Gastrocnemius medialis (tissue), 4 donors: ENCODE measurements at regions of chr4 and their contacts with region 1.

Region 1: GRCh38 chr4:40736910-40737309 is 12.8 kb upstream of the NSUN7 start:
- DNase-seq: no peak
- ATAC-seq: no peak
- H3K4me3 ChIP-seq: no peak overlapping the region
- H3K27ac ChIP-seq: no peak overlapping the region
- H3K4me1 ChIP-seq: peaks cover 2% of the 10 kb centered on the region in 2 donors
- H3K27me3 ChIP-seq: no peaks in the 10 kb centered on the region
- CTCF ChIP-seq: peak in 1 of 5 experiments; percentile 26
- POLR2A ChIP-seq: no peak

Region 2: DNA sequence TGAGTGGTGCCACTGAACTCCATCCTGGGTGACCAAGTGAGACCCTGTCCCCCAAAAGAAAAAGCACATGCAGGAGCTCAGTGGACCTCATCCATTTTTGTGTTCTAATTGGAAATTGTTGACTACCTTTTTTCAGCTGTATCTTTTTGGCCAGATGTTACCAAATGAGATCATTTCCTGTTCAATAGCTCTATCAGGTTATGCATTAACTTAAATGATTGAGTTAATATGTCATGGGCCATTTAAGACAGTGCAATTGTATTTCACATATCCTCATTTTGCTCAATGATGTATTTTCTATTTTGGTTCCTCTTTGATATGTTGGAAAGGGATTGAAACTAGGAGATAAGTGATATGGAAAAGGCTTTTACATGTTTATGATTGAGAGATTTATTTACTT is 566.3 kb before region 1 on chr4:
- in situ Hi-C with region 1: no loop called
- intact Hi-C with region 1: no loop called
- DNase-seq: no peak
- ATAC-seq: no peak
- H3K4me3 ChIP-seq: no peak overlapping the region
- H3K27ac ChIP-seq: no peak overlapping the region
- H3K4me1 ChIP-seq: no peaks in the 10 kb centered on the region
- H3K27me3 ChIP-seq: no peaks in the 10 kb centered on the region
- CTCF ChIP-seq: no peak
- POLR2A ChIP-seq: no peak

Region 3: GRCh38 chr4:40840985-40841571 is 104.2 kb after region 1 on chr4:
- in situ Hi-C with region 1: no loop called
- intact Hi-C with region 1: loop called (anchors 5 kb)
- DNase-seq: peak; percentile 31 to 77
- ATAC-seq: peak; percentile 54 to 81
- H3K4me3 ChIP-seq: no peak overlapping the region
- H3K27ac ChIP-seq: peak overlapping the region; percentile 29 to 76 (median 72)
- H3K4me1 ChIP-seq: peaks cover 31 to 72% of the 10 kb centered on the region in 2 donors
- H3K27me3 ChIP-seq: no peaks in the 10 kb centered on the region
- CTCF ChIP-seq: peak; percentile 12 to 74 (median 64)
- POLR2A ChIP-seq: no peak